Activated CD4-positive, alpha-beta memory T cell treated with anti-CD3 and anti-CD28 coated beads for 36 hours (primary cell): ENCODE measurements at regions of chr2 and their contacts with region 1.

Region 1: DNA sequence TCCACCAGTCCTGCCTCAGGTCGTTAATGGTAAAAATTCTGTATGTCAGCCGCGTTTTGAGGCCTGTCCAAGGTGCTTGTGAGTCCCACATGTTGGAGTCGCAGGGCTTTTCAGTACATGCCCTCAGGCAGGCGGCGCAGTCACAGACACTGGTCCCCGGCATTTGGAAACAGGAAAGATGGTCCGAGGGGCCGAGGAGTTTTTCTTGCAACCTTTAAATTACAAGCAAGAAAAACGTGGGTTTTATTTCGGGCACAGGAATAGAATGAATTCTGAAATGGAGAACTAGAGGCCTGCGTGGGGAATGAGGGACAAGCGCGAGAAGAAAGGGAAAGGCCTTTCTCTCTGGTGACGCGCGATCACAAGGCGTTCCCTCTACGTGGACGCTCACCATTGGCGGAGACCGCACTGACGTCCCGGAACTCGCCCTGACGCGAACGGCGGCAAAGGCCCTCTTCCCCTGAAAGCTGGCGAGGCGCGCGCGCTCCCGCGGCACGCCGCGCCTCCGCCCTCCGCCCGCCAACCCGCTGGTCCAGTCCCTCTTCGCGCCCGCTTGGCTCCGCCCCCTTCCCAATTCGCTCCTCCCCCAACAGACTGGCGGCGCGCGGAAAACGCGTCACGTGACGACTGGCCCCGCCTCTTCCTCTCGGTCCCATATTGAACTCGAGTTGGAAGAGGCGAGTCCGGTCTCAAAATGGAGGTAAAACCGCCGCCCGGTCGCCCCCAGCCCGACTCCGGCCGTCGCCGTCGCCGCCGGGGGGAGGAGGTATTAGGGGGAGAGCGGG is at the start of gene HNRNPA3:
- DNase-seq: peak; percentile 100
- H3K4me3 Mint-ChIP-seq: peak within 1 kb of the TSS; percentile 97
- H3K27ac Mint-ChIP-seq: peak within 1 kb of the TSS; percentile 100
- H3K4me1 Mint-ChIP-seq: peaks cover 35% of the 10 kb centered on the region
- H3K27me3 Mint-ChIP-seq: no peaks in the 10 kb centered on the region
- total RNA-seq, gene HNRNPA3: 303 to 311 TPM

Region 2: DNA sequence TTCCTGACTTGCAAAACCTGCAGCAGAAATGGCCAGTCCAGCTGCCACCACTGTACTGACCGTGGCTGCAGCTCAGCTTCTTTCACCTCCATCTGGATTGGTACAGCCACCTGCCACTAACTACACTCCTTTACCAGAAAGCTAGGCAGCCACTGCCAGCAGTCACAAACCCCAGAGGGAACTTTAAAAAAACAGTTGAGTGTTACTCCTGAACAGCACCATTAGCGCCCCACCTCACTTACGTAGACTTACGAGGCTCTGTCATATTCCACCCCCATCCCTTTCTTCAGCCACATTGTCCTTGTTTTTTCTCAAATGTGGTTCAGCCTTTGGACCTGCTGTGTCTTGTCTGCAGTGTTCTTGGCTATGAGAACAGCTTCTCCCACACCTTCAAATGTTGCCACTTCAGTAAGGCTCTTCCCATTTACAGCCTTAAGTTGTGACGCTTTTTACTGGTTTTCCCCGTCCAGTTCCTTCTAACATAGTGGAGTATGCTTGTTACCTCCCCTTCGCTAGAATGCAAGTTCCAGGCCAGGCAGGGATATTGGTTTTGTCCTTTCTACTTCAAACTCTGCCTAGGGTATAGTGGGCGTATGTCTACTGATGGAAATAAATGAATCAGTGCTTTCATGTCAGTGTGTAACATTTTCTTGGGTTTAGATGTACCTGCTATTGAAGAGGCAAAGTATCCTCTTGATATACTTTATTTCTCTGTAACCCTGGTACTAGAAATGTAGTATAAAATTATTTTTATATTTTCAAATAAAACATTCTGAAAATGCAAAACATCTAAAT is 17.3 kb after region 1 on chr2:
- CTCF ChIA-PET with region 1: interaction called, 6 read pairs
- POLR2A ChIA-PET with region 1: interaction called, 10 read pairs
- intact Hi-C with region 1: loop called (anchors 1 kb)
- DNase-seq: no peak
- H3K4me3 Mint-ChIP-seq: no peak overlapping the region
- H3K27ac Mint-ChIP-seq: peak overlapping the region; percentile 77
- H3K4me1 Mint-ChIP-seq: peaks cover 55% of the 10 kb centered on the region
- H3K27me3 Mint-ChIP-seq: no peaks in the 10 kb centered on the region

Region 3: GRCh38 chr2:177239932-177240630 is 27.8 kb after region 1 on chr2:
- CTCF ChIA-PET with region 1: no interaction called
- POLR2A ChIA-PET with region 1: interaction called, 12 read pairs
- intact Hi-C with region 1: loop called (anchors 1 kb)
- DNase-seq: peak; percentile 61
- H3K4me3 Mint-ChIP-seq: no peak overlapping the region
- H3K27ac Mint-ChIP-seq: peak overlapping the region; percentile 83
- H3K4me1 Mint-ChIP-seq: peaks cover 82% of the 10 kb centered on the region
- H3K27me3 Mint-ChIP-seq: no peaks in the 10 kb centered on the region

Region 4: GRCh38 chr2:177289824-177290628 is 77.7 kb after region 1 on chr2:
- CTCF ChIA-PET with region 1: no interaction called
- POLR2A ChIA-PET with region 1: no interaction called
- intact Hi-C with region 1: loop called (anchors 1 kb)
- DNase-seq: peak; percentile 43
- H3K4me3 Mint-ChIP-seq: no peak overlapping the region
- H3K27ac Mint-ChIP-seq: peak overlapping the region; percentile 87
- H3K4me1 Mint-ChIP-seq: peaks cover 29% of the 10 kb centered on the region
- H3K27me3 Mint-ChIP-seq: no peaks in the 10 kb centered on the region

Region 5: GRCh38 chr2:177552422-177553175 is 340.3 kb after region 1 on chr2:
- CTCF ChIA-PET with region 1: no interaction called
- POLR2A ChIA-PET with region 1: no interaction called
- intact Hi-C with region 1: loop called (anchors 1 kb)
- DNase-seq: peak; percentile 93
- H3K4me3 Mint-ChIP-seq: peak overlapping the region; percentile 97
- H3K27ac Mint-ChIP-seq: peak overlapping the region; percentile 100
- H3K4me1 Mint-ChIP-seq: peaks cover 8% of the 10 kb centered on the region
- H3K27me3 Mint-ChIP-seq: no peaks in the 10 kb centered on the region